MCF 10A (cell line): ENCODE measurements at regions of chr22 and their contacts with region 1.

Region 1: GRCh38 chr22:30606455-30607299 is at the start of gene TCN2:
- DNase-seq: peak; percentile 35
- H3K4me3 Mint-ChIP-seq: peak within 1 kb of the TSS; percentile 80
- H3K27ac Mint-ChIP-seq: peak within 1 kb of the TSS; percentile 58
- H3K4me1 Mint-ChIP-seq: peaks cover 9% of the 10 kb centered on the region
- H3K27me3 Mint-ChIP-seq: no peaks in the 10 kb centered on the region
- CTCF ChIP-seq: no peak
- total RNA-seq, gene TCN2: 1.2 and 1.4 TPM in 2 replicates

Region 2: GRCh38 chr22:30490399-30490798 is 116.3 kb before region 1 on chr22:
- CTCF ChIA-PET with region 1: no interaction called
- POLR2A ChIA-PET with region 1: no interaction called
- intact Hi-C with region 1: no loop called
- DNase-seq: no peak
- H3K4me3 Mint-ChIP-seq: no peak overlapping the region
- H3K27ac Mint-ChIP-seq: no peak overlapping the region
- H3K4me1 Mint-ChIP-seq: no peaks in the 10 kb centered on the region
- H3K27me3 Mint-ChIP-seq: peaks cover 36% of the 10 kb centered on the region
- CTCF ChIP-seq: no peak

Region 3: GRCh38 chr22:30580896-30581295 is 25.8 kb before region 1 on chr22:
- CTCF ChIA-PET with region 1: no interaction called
- POLR2A ChIA-PET with region 1: no interaction called
- intact Hi-C with region 1: no loop called
- DNase-seq: no peak
- H3K4me3 Mint-ChIP-seq: no peak overlapping the region
- H3K27ac Mint-ChIP-seq: no peak overlapping the region
- H3K4me1 Mint-ChIP-seq: no peaks in the 10 kb centered on the region
- H3K27me3 Mint-ChIP-seq: no peaks in the 10 kb centered on the region
- CTCF ChIP-seq: no peak

Region 4: DNA sequence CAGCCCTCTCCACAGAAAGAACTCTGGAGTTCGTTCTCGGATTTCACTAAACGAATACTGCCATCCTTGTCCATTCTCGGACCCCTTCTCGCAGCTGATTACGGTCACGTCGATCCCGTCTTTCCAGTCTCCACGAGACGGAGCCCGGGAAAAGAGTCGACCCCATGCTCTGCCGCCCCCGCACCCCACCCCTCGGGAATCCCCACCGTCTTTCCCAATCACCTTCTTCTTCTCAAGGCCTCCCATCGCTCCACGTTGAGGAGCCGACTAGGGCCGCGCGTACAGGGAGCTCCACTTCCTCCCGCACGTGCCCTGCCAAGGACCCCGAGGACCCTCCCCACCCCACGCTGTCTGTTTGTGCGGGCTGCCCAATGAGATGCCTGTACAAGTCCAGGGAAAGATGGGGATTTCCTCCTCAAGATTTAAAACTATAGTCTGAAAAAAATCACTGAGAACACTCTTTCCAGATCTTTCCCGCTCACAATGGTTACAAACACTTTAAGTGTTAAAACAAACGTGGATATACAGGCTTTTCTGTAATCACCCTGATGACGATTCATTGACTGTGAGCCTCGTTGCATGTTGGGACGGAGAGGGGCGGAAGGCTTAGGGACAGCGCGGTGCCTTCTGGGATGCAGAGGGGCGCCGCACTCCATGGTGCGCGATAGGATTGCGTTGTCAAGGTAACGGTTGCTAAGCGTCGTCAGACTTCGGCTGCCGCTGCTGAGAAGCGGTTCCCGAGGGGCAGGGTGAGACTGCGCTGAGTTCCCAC is 14.9 kb before region 1 on chr22 and contains the start of gene PES1:
- CTCF ChIA-PET with region 1: interaction called, 9 read pairs
- POLR2A ChIA-PET with region 1: interaction called, 30 read pairs
- intact Hi-C with region 1: no loop called
- DNase-seq: peak; percentile 97
- H3K4me3 Mint-ChIP-seq: no peak within 1 kb of the TSS
- H3K27ac Mint-ChIP-seq: no peak within 1 kb of the TSS
- H3K4me1 Mint-ChIP-seq: no peaks in the 10 kb centered on the region
- H3K27me3 Mint-ChIP-seq: no peaks in the 10 kb centered on the region
- CTCF ChIP-seq: no peak
- total RNA-seq, gene PES1: 114 and 145 TPM in 2 replicates

Region 5: DNA sequence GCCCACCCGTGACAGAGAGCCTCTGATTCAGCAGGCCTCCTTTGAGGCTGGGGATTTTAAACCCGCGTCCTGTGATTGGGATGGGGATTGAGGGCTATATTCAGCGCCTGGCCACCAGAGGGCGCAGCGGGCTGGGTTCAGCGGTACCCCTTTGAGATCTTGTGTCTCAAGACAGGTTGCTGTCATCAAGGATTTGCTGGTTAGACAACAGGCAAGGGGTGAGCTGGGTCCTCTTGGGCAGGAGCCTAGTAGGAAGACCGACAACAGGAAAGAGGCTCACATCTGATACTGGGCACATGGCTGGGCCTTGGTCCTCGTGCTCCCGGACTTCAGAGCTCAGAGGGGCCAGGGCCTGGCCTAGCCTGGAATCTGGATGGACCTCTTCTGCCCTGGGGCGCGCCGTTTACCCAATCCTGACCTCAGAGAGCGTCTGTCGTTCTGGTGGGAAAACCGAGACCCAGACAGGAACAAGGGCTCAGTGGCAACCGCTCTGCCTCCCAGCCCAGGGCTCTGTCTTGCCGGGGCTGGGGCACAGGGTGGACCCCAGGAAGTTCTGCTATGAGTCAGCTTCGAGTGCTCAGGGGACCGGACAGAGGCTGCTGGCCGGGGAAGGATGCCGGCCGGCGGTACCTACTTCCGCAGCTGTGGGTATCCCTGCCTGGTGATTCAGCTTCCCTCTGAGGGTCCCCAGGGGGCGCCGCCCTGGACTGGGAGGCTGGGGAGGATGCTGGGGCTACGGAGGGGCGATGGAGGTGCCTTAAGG is 28.0 kb after region 1 on chr22:
- CTCF ChIA-PET with region 1: interaction called, 11 read pairs
- POLR2A ChIA-PET with region 1: interaction called, 3 read pairs
- intact Hi-C with region 1: no loop called
- DNase-seq: peak; percentile 90
- H3K4me3 Mint-ChIP-seq: peak overlapping the region; percentile 70
- H3K27ac Mint-ChIP-seq: no peak overlapping the region
- H3K4me1 Mint-ChIP-seq: no peaks in the 10 kb centered on the region
- H3K27me3 Mint-ChIP-seq: no peaks in the 10 kb centered on the region
- CTCF ChIP-seq: peak; percentile 93